B cell (primary cell): ENCODE measurements at regions of chr14 and their contacts with region 1.

Region 1: GRCh38 chr14:91996948-91997371 is 42.9 kb downstream of the TRIP11 start:
- DNase-seq: peak; percentile 59
- ATAC-seq: no peak
- H3K4me3 ChIP-seq: no peak overlapping the region
- H3K4me3 Mint-ChIP-seq: no peak overlapping the region
- H3K27ac ChIP-seq: no peak overlapping the region
- H3K27ac Mint-ChIP-seq: no peak overlapping the region
- H3K4me1 ChIP-seq: peaks cover 0 to 5% of the 10 kb centered on the region in 2 donors
- H3K4me1 Mint-ChIP-seq: peaks cover 5% of the 10 kb centered on the region
- H3K27me3 ChIP-seq: no peaks in the 10 kb centered on the region
- H3K27me3 Mint-ChIP-seq: no peaks in the 10 kb centered on the region
- CTCF ChIP-seq: peak; percentile 76

Region 2: DNA sequence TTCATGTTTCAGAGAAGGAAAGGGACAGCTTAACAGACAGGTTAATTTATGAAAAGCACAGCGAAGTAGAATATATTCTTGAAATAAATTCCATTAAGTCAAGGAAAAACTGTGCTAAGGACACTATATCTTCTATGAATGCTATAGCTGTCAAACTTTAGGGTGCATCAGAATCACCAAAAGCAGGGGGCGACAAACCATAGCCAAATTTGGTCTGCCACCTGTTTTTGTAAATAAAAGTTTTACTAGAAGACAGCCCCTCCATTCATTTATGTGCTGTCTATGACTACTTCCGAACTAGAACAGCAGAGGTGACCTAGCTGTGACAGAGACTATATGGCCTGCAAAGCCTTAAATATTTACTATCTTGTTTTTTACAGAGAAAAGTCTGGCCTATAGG is 512.8 kb before region 1 on chr14:
- CTCF ChIA-PET with region 1: interaction called, 8 read pairs
- POLR2A ChIA-PET with region 1: no interaction called
- intact Hi-C with region 1: loop called (anchors 1 kb)
- DNase-seq: peak; percentile 41
- ATAC-seq: no peak
- H3K4me3 ChIP-seq: no peak overlapping the region
- H3K4me3 Mint-ChIP-seq: no peak overlapping the region
- H3K27ac ChIP-seq: peak overlapping the region; percentile 42 to 78
- H3K27ac Mint-ChIP-seq: peak overlapping the region; percentile 75
- H3K4me1 ChIP-seq: peaks cover 5 to 9% of the 10 kb centered on the region in 2 donors
- H3K4me1 Mint-ChIP-seq: peaks cover 55% of the 10 kb centered on the region
- H3K27me3 ChIP-seq: no peaks in the 10 kb centered on the region
- H3K27me3 Mint-ChIP-seq: no peaks in the 10 kb centered on the region
- CTCF ChIP-seq: peak; percentile 46

Region 3: DNA sequence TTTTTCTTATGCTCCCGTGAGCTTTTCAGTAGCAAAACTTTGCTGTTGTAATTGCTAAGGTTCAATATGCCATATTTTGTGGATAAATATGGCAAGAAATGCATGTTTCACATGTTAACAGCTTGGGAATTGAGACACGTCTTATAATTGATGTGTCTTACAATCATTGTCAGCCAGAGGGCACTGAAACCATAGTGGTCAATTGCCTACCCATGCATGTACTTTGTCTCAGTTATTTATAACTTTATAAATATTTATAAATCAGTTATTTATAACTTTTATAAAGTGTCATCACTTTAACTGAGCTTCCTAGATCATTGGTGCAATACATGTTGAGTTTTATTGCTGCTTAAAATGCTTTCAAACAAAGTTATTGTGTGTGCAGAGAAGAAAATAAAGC is 347.0 kb before region 1 on chr14:
- CTCF ChIA-PET with region 1: interaction called, 72 read pairs
- POLR2A ChIA-PET with region 1: no interaction called
- intact Hi-C with region 1: loop called (anchors 5 kb)
- DNase-seq: peak; percentile 42
- ATAC-seq: no peak
- H3K4me3 ChIP-seq: no peak overlapping the region
- H3K4me3 Mint-ChIP-seq: no peak overlapping the region
- H3K27ac ChIP-seq: no peak overlapping the region
- H3K27ac Mint-ChIP-seq: no peak overlapping the region
- H3K4me1 ChIP-seq: no peaks in the 10 kb centered on the region
- H3K4me1 Mint-ChIP-seq: no peaks in the 10 kb centered on the region
- H3K27me3 ChIP-seq: peaks cover 0 to 5% (median 0%) of the 10 kb centered on the region in 4 experiments
- H3K27me3 Mint-ChIP-seq: peaks cover 29% of the 10 kb centered on the region
- CTCF ChIP-seq: peak; percentile 74

Region 4: GRCh38 chr14:91911474-91912032 is 85.4 kb before region 1 on chr14:
- CTCF ChIA-PET with region 1: interaction called, 11 read pairs
- POLR2A ChIA-PET with region 1: no interaction called
- intact Hi-C with region 1: no loop called
- DNase-seq: peak; percentile 47
- ATAC-seq: peak; percentile 84
- H3K4me3 ChIP-seq: peak overlapping the region in 3 of 5 experiments; percentile 20 to 48 (median 25)
- H3K4me3 Mint-ChIP-seq: peak overlapping the region; percentile 66
- H3K27ac ChIP-seq: peak overlapping the region in 1 of 2 donors; percentile 76
- H3K27ac Mint-ChIP-seq: peak overlapping the region; percentile 82
- H3K4me1 ChIP-seq: peaks cover 12 to 14% of the 10 kb centered on the region in 2 donors
- H3K4me1 Mint-ChIP-seq: peaks cover 16% of the 10 kb centered on the region
- H3K27me3 ChIP-seq: peaks cover 0 to 6% (median 0%) of the 10 kb centered on the region in 4 experiments
- H3K27me3 Mint-ChIP-seq: peaks cover 20% of the 10 kb centered on the region
- CTCF ChIP-seq: no peak